ENCODE measurements at regions of chr7 and their contacts with region 1.

Region 1: GRCh38 chr7:155796381-155797261 is 15.6 kb downstream of the SHH start:
- DNase-seq: peak; percentile 45 to 85 (median 59)
- ATAC-seq: peak in 3 of 4 donors; percentile 41 to 84 (median 69)
- H3K4me3 ChIP-seq: no peak overlapping the region
- H3K27ac ChIP-seq: no peak overlapping the region
- H3K4me1 ChIP-seq: peaks cover 0 to 9% (median 4%) of the 10 kb centered on the region in 12 donors
- H3K27me3 ChIP-seq: peaks cover 14 to 62% (median 36%) of the 10 kb centered on the region in 9 donors
- CTCF ChIP-seq: peak; percentile 66 to 94 (median 88)
- POLR2A ChIP-seq: no peak

Region 2: GRCh38 chr7:155477476-155477875 is 319.1 kb before region 1 on chr7:
- intact Hi-C with region 1: no loop called
- DNase-seq: no peak
- ATAC-seq: no peak
- H3K4me3 ChIP-seq: no peak overlapping the region
- H3K27ac ChIP-seq: no peak overlapping the region
- H3K4me1 ChIP-seq: peaks cover 0 to 5% (median 0%) of the 10 kb centered on the region in 12 donors
- H3K27me3 ChIP-seq: peaks cover 12 to 90% (median 51%) of the 10 kb centered on the region in 9 donors
- CTCF ChIP-seq: no peak
- POLR2A ChIP-seq: no peak

Region 3: GRCh38 chr7:156192921-156193320 is 396.3 kb after region 1 on chr7:
- intact Hi-C with region 1: no loop called
- DNase-seq: no peak
- ATAC-seq: no peak
- H3K4me3 ChIP-seq: no peak overlapping the region
- H3K27ac ChIP-seq: no peak overlapping the region
- H3K4me1 ChIP-seq: no peaks in the 10 kb centered on the region
- H3K27me3 ChIP-seq: peaks cover 0 to 6% (median 0%) of the 10 kb centered on the region in 9 donors
- CTCF ChIP-seq: no peak
- POLR2A ChIP-seq: no peak

Region 4: DNA sequence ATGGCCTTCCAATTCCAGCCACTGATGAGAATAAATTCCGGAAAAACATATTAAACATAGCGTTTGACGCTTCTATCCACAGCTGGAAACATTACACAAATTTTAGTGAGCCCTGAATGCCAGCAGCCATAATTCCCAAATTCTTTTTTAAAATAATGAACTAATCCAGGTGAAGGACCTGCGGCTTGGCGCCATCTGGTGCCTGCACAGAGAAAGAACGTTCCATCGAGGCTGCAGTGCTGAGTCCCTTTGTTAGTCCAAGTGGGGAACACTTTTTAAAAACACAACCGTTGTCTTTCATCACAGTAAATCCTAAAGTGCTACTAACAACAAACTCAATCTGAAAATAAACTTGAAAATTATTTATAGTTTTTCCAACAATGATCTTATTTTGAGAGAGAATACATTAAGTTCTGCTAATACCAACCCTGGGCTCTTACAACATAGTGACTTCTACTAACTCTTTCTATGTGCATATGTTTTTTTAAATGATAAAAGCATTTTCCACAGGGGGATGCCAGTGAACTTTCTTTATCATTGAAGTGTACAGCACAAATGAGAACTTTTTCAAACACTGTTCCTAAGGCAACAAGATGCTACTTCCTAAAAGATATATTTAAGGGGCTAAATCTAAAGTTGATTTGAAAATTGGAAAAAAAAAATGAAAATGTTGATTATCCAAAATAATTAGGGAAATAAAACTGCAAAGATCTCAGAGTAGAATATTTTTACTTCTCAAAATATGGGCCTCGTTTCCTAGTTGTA is 677.0 kb after region 1 on chr7:
- intact Hi-C with region 1: loop called in 8 of 10 experiments (anchors 2 to 10 kb)
- DNase-seq: no peak
- ATAC-seq: no peak
- H3K4me3 ChIP-seq: no peak overlapping the region
- H3K27ac ChIP-seq: no peak overlapping the region
- H3K4me1 ChIP-seq: no peaks in the 10 kb centered on the region
- H3K27me3 ChIP-seq: peaks cover 0 to 26% (median 0%) of the 10 kb centered on the region in 9 donors
- CTCF ChIP-seq: peak; percentile 42 to 71 (median 54)
- POLR2A ChIP-seq: no peak

Region 5: GRCh38 chr7:156764016-156764669 is 967.5 kb after region 1 on chr7:
- intact Hi-C with region 1: loop called in 7 of 10 experiments (anchors 5 to 10 kb)
- DNase-seq: peak; percentile 59 to 76 (median 64)
- ATAC-seq: peak; percentile 93 to 98 (median 96)
- H3K4me3 ChIP-seq: no peak overlapping the region
- H3K27ac ChIP-seq: no peak overlapping the region
- H3K4me1 ChIP-seq: peaks cover 0 to 9% (median 0%) of the 10 kb centered on the region in 12 donors
- H3K27me3 ChIP-seq: no peaks in the 10 kb centered on the region
- CTCF ChIP-seq: peak; percentile 39 to 73 (median 62)
- POLR2A ChIP-seq: no peak

Region 6: DNA sequence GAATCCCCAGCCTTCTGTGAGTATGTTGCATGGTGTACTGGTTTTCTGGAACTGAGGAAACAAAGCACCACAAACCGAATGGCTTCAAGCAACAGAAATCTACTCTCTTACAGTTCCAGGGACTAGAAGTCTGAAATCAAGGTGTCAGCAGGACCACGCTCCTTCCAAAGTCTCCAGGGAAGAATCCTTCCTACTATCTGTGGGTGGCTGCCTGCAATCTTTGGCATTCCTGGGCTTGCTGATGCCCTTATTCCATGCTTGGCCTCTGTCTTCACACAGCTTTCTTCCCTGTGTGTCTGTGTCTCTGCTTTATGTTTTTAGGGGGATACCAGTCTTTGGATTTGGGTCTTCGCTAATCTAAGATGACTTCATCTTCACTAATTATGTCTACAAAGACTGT is 1015.1 kb after region 1 on chr7:
- intact Hi-C with region 1: loop called in 6 of 10 experiments (anchors 5 to 10 kb)
- DNase-seq: no peak
- ATAC-seq: no peak
- H3K4me3 ChIP-seq: no peak overlapping the region
- H3K27ac ChIP-seq: no peak overlapping the region
- H3K4me1 ChIP-seq: no peaks in the 10 kb centered on the region
- H3K27me3 ChIP-seq: no peaks in the 10 kb centered on the region
- CTCF ChIP-seq: no peak
- POLR2A ChIP-seq: no peak

Region 7: GRCh38 chr7:156816943-156817572 is 1020.4 kb after region 1 on chr7:
- intact Hi-C with region 1: loop called in 8 of 10 experiments (anchors 5 to 10 kb)
- DNase-seq: no peak
- ATAC-seq: no peak
- H3K4me3 ChIP-seq: no peak overlapping the region
- H3K27ac ChIP-seq: no peak overlapping the region
- H3K4me1 ChIP-seq: no peaks in the 10 kb centered on the region
- H3K27me3 ChIP-seq: no peaks in the 10 kb centered on the region
- CTCF ChIP-seq: peak in 10 of 12 donors; percentile 17 to 52 (median 33)
- POLR2A ChIP-seq: no peak

Region 8: GRCh38 chr7:156827587-156828203 is 1031.1 kb after region 1 on chr7:
- intact Hi-C with region 1: loop called in 2 of 10 experiments (anchors 10 kb)
- DNase-seq: no peak
- ATAC-seq: no peak
- H3K4me3 ChIP-seq: no peak overlapping the region
- H3K27ac ChIP-seq: no peak overlapping the region
- H3K4me1 ChIP-seq: peaks cover 0 to 19% (median 0%) of the 10 kb centered on the region in 12 donors
- H3K27me3 ChIP-seq: no peaks in the 10 kb centered on the region
- CTCF ChIP-seq: peak; percentile 18 to 58 (median 44)
- POLR2A ChIP-seq: no peak

Region 9: GRCh38 chr7:156949541-156950380 is 1153.1 kb after region 1 on chr7 and contains the start of gene NOM1:
- intact Hi-C with region 1: loop called in 1 of 10 experiments (anchors 5 kb)
- DNase-seq: peak; percentile 89 to 97 (median 93)
- ATAC-seq: peak; percentile 76 to 99 (median 96)
- H3K4me3 ChIP-seq: peak within 1 kb of the TSS; percentile 81 to 100 (median 92)
- H3K27ac ChIP-seq: peak within 1 kb of the TSS in 11 of 12 donors; percentile 3 to 79 (median 64)
- H3K4me1 ChIP-seq: peaks cover 0 to 33% (median 20%) of the 10 kb centered on the region in 12 donors
- H3K27me3 ChIP-seq: peaks cover 0 to 23% (median 0%) of the 10 kb centered on the region in 9 donors
- CTCF ChIP-seq: peak; percentile 54 to 100 (median 81)
- POLR2A ChIP-seq: peak in 1 of 2 donors; percentile 55
- total RNA-seq, gene NOM1: 6.0 to 12.2 (median 9.1) TPM

Measured in heart left ventricle (tissue), 16 donors.